ENCODE measurements at regions of chr3 and their contacts with region 1.

Region 1: DNA sequence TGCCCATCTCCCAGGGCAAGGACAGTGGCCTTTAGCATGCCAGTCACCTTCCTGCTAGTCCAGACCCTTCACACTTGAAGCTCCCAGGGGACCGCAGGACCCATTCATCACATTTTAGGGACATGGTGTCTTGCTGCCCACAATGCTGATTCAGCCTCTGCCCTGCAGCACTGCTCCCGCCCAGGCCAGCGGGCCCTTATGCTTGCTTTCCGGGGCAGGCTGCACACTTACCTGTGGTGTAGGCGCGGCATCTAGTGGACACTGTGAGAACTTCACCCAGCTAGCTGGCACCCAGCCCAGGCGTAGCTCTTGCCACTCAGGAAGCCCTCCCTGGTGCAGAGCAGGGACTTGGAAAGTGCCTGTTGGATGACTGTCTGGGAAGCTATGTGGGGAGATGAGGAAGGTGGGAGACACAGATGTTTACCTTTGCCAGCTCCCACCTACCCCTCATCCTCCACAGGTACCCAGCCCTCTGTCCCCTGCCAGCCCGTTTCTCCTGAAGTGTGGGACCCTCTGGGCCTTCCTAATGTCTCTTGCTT is 26.2 kb upstream of the NR2C2 start:
- DNase-seq: peak; percentile 87
- H3K4me3 ChIP-seq: peak overlapping the region in 1 of 2 experiments; percentile 13; a peak in 1 of 4 replicates
- H3K27ac ChIP-seq: no peak overlapping the region
- H3K4me1 ChIP-seq: peaks cover 0 to 15% of the 10 kb centered on the region in 2 experiments; a peak in 1 of 4 replicates
- H3K27me3 ChIP-seq: peaks cover 4% of the 10 kb centered on the region; the same call in 1 of the 2 replicates
- CTCF ChIP-seq: peak; percentile 93
- EP300 ChIP-seq: no peak
- RAD21 ChIP-seq: peak; percentile 99

Region 2: GRCh38 chr3:14508961-14509795 is 412.0 kb before region 1 on chr3:
- CTCF ChIA-PET with region 1: interaction called, 16 read pairs
- POLR2A ChIA-PET with region 1: no interaction called
- DNase-seq: peak; percentile 94
- H3K4me3 ChIP-seq: peak overlapping the region in 1 of 2 experiments; percentile 27; a peak in 2 of 4 replicates
- H3K27ac ChIP-seq: no peak overlapping the region
- H3K4me1 ChIP-seq: peaks cover 0 to 14% of the 10 kb centered on the region in 2 experiments; a peak in 1 of 4 replicates
- H3K27me3 ChIP-seq: no peaks in the 10 kb centered on the region
- CTCF ChIP-seq: peak; percentile 74
- EP300 ChIP-seq: no peak
- RAD21 ChIP-seq: peak; percentile 82

Region 3: GRCh38 chr3:14680716-14681115 is 240.4 kb before region 1 on chr3:
- CTCF ChIA-PET with region 1: interaction called, 202 read pairs
- POLR2A ChIA-PET with region 1: no interaction called
- DNase-seq: no peak
- H3K4me3 ChIP-seq: no peak overlapping the region
- H3K27ac ChIP-seq: no peak overlapping the region
- H3K4me1 ChIP-seq: peaks cover 0 to 14% of the 10 kb centered on the region in 2 experiments; a peak in 2 of 4 replicates
- H3K27me3 ChIP-seq: no peaks in the 10 kb centered on the region
- CTCF ChIP-seq: no peak
- EP300 ChIP-seq: no peak
- RAD21 ChIP-seq: no peak

Region 4: GRCh38 chr3:14791343-14791945 is 129.7 kb before region 1 on chr3:
- CTCF ChIA-PET with region 1: interaction called, 134 read pairs
- POLR2A ChIA-PET with region 1: no interaction called
- DNase-seq: peak; percentile 85
- H3K4me3 ChIP-seq: no peak overlapping the region
- H3K27ac ChIP-seq: no peak overlapping the region
- H3K4me1 ChIP-seq: peaks cover 0 to 4% of the 10 kb centered on the region in 2 experiments; a peak in 1 of 4 replicates
- H3K27me3 ChIP-seq: no peaks in the 10 kb centered on the region
- CTCF ChIP-seq: peak; percentile 60
- EP300 ChIP-seq: no peak
- RAD21 ChIP-seq: peak; percentile 88

Region 5: DNA sequence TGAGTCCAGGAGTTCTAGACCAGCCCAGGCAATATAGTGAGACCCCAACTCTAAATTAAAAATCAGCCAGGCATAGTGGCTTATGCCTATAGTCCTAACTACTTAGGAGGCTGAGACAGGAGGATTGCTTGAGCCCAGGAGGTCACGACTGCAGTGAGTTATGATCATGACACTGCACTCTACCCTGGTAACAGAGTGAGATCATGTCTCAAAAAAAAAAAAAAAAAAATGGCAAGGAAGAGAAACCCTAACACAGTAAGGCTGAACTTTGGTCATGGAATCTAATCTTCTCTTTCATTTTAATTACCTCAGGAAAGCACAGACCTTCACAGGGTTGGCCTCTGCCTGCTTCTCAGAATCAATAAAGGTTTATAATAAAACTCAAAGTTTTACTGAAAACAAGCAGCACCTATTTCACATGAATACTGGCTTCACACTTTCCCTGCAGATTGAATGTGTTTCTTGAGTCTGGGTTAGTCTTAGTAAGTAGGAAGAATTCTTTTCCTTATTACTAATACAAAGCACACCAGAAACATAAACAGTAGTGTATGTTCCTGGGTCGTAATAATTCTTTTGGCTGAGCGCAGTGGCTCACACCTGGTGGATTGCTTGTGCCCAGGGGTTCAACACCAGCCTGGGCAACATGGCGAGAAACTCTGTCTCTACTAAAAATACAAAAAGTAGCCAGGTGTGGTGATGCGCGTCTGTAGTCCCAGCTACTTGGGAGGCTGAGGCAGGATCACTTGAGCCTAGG is 14.6 kb after region 1 on chr3:
- CTCF ChIA-PET with region 1: interaction called, 14 read pairs
- POLR2A ChIA-PET with region 1: no interaction called
- DNase-seq: no peak
- H3K4me3 ChIP-seq: no peak overlapping the region
- H3K27ac ChIP-seq: no peak overlapping the region
- H3K4me1 ChIP-seq: peaks cover 0 to 5% of the 10 kb centered on the region in 2 experiments; a peak in 1 of 4 replicates
- H3K27me3 ChIP-seq: no peaks in the 10 kb centered on the region
- CTCF ChIP-seq: no peak
- EP300 ChIP-seq: no peak
- RAD21 ChIP-seq: no peak

Region 6: DNA sequence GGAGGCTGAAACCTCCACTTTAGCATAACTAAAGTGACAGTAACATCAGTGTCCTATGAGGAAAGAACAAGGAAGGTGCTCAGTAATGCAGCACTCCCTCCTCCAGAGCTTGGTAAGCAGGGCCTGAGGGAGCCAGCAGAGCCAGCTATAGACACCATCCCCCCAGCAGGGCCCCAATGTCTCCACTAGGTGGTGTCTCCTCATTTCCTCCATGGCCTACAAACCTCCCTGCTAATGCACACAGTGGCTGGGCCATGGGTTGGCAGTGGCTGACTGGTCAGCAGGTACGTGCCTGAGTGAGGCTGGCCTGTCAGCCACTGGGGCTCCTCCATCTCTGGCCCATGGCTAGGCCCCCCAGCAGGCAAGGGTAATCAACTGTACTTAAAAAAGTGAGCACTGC is 130.4 kb after region 1 on chr3:
- CTCF ChIA-PET with region 1: interaction called, 18 read pairs
- POLR2A ChIA-PET with region 1: no interaction called
- DNase-seq: peak; percentile 75
- H3K4me3 ChIP-seq: no peak overlapping the region; a peak in 1 of 4 replicates
- H3K27ac ChIP-seq: peak overlapping the region in 1 of 2 experiments; percentile 17; a peak in 1 of 4 replicates
- H3K4me1 ChIP-seq: peaks cover 0 to 15% of the 10 kb centered on the region in 2 experiments; a peak in 1 of 4 replicates
- H3K27me3 ChIP-seq: no peaks in the 10 kb centered on the region
- CTCF ChIP-seq: peak; percentile 57
- EP300 ChIP-seq: no peak
- RAD21 ChIP-seq: peak; percentile 36

Measured in SK-N-SH (cell line).